Activated naive CD4-positive, alpha-beta T cell treated with anti-CD3 and anti-CD28 coated beads for 36 hours (primary cell): ENCODE measurements at regions of chr1 and their contacts with region 1.

Region 1: GRCh38 chr1:64966158-64966971 is at the start of gene JAK1:
- DNase-seq: peak; percentile 87
- H3K4me3 Mint-ChIP-seq: peak within 1 kb of the TSS; percentile 89
- H3K27ac Mint-ChIP-seq: peak within 1 kb of the TSS; percentile 90
- H3K4me1 Mint-ChIP-seq: peaks cover 46% of the 10 kb centered on the region
- H3K27me3 Mint-ChIP-seq: no peaks in the 10 kb centered on the region
- total RNA-seq, gene JAK1: 139 to 140 TPM

Region 2: DNA sequence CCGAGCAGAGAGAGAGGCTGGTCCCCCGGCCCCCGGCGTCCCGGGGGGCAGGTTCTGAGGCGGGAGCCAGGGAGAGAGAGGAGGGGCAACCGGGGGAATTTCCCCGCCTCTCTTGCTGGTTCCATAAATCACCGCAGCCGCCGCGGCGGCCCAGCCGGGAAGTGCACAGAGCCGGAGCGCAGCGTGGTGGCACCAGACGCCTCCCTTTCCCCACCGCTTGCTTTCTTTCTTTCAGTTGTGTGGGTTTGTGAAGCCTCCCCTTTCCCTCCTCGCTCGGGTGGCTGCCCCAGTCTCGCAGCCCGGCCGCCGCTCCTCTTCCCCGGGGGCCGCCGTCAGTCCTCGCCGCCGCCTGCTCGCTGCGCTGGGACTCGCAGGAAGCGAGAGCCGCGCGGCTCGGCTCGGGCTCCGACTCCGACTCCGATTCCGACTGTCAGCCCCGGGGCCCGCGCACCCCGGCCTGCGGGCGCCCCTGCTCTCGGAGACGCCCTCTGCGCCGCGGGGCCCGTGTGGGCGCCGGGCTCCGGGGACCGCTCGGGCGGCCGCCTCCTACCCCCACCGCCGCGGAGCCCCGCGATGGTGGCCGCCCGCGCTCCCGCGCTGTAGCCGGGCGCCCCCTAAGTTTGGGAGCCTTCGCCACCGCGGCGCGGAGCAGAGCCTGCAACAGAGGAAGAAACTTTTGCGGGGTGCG is 496.2 kb before region 1 on chr1 and contains the start of gene CACHD1:
- CTCF ChIA-PET with region 1: no interaction called
- intact Hi-C with region 1: loop called (anchors 5 kb)
- DNase-seq: peak; percentile 86
- H3K4me3 Mint-ChIP-seq: peak within 1 kb of the TSS; percentile 78
- H3K27ac Mint-ChIP-seq: peak within 1 kb of the TSS; percentile 3
- H3K4me1 Mint-ChIP-seq: peaks cover 14% of the 10 kb centered on the region
- H3K27me3 Mint-ChIP-seq: peaks cover 27% of the 10 kb centered on the region
- total RNA-seq, gene CACHD1: 2.6 to 2.9 TPM

Region 3: DNA sequence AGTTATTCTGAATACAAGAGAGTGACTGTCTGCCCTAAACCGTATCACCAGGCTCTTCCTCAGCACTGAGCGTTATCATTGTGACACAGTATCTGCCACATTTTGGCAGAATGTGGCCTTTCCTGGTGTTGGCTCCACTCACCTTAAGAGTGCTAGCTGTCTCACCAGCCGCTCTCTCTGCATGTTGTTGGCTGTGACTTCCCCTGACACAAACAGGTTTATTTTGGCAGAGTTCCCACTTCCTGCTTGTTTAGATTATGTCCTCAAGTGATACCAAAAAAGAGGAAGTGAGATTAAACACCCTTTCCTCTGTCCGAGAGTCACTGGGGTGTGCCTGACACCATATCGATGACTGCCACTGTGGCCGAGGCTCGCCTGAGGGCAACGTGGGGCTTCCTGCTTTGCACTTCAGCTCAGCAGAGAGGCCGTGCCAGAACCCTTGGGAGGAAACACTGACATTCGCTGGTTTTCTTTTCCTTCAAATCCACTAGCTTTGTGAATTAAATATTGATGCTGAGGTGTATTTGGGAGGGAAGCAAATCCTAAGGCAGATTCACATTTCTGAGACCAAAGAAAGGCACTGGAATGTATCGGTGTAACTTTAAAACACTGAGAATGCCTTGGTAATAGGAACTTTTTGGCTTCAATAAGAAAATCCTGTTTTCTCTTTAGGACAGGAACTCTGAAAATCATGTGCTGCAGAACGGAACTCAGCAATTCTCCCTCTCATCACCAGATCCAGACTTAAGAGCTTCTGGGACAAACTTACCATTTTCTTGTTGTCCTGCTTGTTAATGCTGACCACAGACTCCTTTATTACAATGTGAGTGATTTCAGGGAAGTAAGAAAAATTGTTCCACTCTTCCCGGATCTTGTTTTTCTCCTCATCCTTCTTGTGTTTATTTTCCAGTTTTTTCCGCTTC is 102.1 kb before region 1 on chr1:
- CTCF ChIA-PET with region 1: no interaction called
- intact Hi-C with region 1: loop called (anchors 1 kb)
- DNase-seq: peak; percentile 60
- H3K4me3 Mint-ChIP-seq: no peak overlapping the region
- H3K27ac Mint-ChIP-seq: peak overlapping the region; percentile 63
- H3K4me1 Mint-ChIP-seq: peaks cover 19% of the 10 kb centered on the region
- H3K27me3 Mint-ChIP-seq: no peaks in the 10 kb centered on the region

Region 4: DNA sequence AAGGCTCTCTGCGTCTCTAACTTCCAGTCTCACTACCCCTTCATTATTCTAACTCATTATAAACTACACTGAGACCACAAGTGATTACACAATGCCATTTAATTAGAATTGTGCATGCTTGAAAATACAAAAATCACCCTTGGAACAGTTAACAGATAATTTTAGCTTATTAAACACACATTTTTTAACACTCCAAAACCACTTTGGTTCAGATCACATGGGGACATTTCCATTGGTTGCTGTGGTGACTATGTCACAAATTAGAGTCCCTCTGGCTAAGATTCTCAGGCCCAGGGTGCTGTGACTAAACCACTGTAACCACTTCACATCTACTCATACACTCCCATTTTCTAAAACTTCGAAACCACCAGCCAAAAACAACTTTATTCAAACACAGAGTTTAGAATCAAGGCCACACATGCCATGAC is 43.1 kb before region 1 on chr1:
- CTCF ChIA-PET with region 1: interaction called, 10 read pairs
- intact Hi-C with region 1: loop called (anchors 1 kb)
- DNase-seq: peak; percentile 72
- H3K4me3 Mint-ChIP-seq: peak overlapping the region; percentile 25
- H3K27ac Mint-ChIP-seq: peak overlapping the region; percentile 87
- H3K4me1 Mint-ChIP-seq: peaks cover 96% of the 10 kb centered on the region
- H3K27me3 Mint-ChIP-seq: no peaks in the 10 kb centered on the region

Region 5: DNA sequence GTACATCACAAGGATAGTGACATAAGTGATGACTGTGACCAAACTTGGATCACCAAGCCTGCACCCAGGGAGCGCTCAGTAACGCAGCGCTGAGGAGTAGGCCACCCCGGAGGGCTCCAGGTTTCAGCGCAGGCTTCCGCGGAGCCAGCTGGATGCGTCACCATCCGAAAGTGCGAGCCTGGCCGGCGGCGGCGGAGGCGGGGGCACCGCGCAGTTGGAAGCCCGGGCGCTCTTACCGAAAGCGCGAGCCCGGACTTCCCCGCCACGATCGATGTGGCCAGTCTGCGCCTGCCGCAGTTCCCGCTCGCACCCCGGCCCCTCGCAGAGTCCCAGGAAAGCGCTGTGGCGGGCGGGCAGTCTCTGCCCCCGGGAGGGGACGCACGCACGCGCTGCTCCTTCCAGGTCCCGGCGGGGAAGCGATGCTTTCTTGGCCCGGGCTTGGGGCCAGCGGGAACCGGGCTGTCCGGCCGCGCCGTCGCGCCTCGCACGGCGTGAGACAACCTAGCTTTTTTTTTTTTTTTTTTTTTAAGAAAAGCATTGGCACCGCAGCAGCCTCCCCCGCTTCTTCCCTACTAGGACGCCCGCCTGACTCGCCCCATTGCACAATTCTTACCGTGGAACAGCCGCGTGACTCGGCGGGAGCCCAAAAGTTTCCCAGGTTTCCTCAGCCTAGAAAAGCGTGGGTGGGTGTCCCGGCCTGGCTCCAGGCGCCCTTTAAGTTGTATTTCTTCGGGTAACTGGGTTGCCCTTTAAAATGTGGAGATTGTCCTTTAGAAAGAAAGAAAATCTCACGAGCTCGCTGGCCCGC is 36.3 kb after region 1 on chr1:
- CTCF ChIA-PET with region 1: interaction called, 4 read pairs
- intact Hi-C with region 1: loop called (anchors 1 kb)
- DNase-seq: peak; percentile 81
- H3K4me3 Mint-ChIP-seq: peak overlapping the region; percentile 82
- H3K27ac Mint-ChIP-seq: peak overlapping the region; percentile 88
- H3K4me1 Mint-ChIP-seq: peaks cover 35% of the 10 kb centered on the region
- H3K27me3 Mint-ChIP-seq: no peaks in the 10 kb centered on the region

Region 6: GRCh38 chr1:65148548-65149350 is 182.4 kb after region 1 on chr1:
- CTCF ChIA-PET with region 1: no interaction called
- intact Hi-C with region 1: no loop called
- DNase-seq: peak; percentile 41
- H3K4me3 Mint-ChIP-seq: peak overlapping the region; percentile 80
- H3K27ac Mint-ChIP-seq: no peak overlapping the region
- H3K4me1 Mint-ChIP-seq: peaks cover 10% of the 10 kb centered on the region
- H3K27me3 Mint-ChIP-seq: peaks cover 47% of the 10 kb centered on the region

Region 7: GRCh38 chr1:65209005-65209885 is 242.9 kb after region 1 on chr1:
- CTCF ChIA-PET with region 1: no interaction called
- intact Hi-C with region 1: loop called (anchors 10 kb)
- DNase-seq: peak; percentile 28
- H3K4me3 Mint-ChIP-seq: no peak overlapping the region
- H3K27ac Mint-ChIP-seq: no peak overlapping the region
- H3K4me1 Mint-ChIP-seq: peaks cover 23% of the 10 kb centered on the region
- H3K27me3 Mint-ChIP-seq: peaks cover 3% of the 10 kb centered on the region